A549 (cell line): ENCODE measurements at regions of chr3 and their contacts with region 1.

Region 1: DNA sequence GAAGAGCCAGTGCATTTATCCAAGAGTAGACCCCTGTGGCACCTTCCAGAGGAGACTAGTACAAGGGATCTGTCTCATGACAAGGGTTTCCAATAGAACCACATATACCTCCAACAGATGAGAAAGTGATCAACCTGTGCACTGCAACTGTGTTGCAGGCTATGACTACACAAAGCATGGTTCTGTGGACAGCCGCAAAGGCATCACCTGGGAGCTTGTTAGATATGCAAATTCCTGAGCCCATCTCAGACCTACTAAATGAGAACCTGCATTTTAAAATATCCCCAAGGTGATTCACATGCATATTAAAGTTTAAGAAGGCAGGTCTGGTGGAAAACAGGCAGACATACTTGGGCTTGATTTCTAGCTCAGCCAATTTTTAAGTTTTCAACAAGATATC is 368.7 kb downstream of the FOXP1 start:
- DNase-seq: no peak
- ATAC-seq: no peak
- H3K4me3 ChIP-seq: no peak overlapping the region
- H3K27ac ChIP-seq: no peak overlapping the region
- H3K4me1 ChIP-seq: peaks cover 21% of the 10 kb centered on the region
- CTCF ChIP-seq: no peak
- EP300 ChIP-seq: no peak
- POLR2A ChIP-seq: no peak
- RAD21 ChIP-seq: no peak

Region 2: DNA sequence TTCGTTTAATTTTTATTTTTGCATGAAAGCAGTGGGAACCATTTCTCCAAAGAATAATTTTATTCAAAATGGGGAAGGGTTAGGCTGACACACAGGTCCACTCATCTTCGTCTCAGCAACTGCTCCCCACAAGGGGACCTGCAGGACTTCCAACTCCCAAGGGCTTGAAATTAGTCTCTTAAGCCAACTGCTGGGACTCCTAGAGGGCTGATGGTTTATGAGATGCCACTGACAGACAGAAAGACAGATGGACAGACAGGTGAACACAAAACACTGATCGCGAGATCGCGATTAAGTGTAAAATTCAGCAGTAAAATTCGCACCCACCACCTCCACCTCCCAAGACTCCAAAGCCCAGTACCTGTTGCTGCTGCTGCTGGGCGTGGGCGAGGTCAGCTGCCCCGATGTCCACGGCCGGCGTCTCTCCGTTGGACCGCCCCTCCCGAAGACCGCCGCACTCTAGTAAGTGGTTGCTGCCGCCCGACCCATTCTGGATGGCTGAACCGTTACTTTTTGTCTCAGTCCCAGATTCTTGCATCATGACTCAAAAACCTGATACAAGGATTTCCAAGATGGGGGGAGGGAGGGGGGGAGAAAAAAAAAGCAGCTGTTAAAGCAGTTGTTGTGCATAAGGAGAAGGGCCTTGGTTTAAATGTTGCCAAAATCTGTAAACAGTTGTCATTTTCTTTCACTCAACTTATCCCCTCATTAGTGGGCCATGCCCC is 16.8 kb before region 1 on chr3:
- CTCF ChIA-PET with region 1: no interaction called
- POLR2A ChIA-PET with region 1: no interaction called
- DNase-seq: no peak
- ATAC-seq: no peak
- H3K4me3 ChIP-seq: no peak overlapping the region
- H3K27ac ChIP-seq: no peak overlapping the region
- H3K4me1 ChIP-seq: peaks cover 16% of the 10 kb centered on the region
- CTCF ChIP-seq: no peak
- EP300 ChIP-seq: no peak
- POLR2A ChIP-seq: 0 out of 2 replicates have a peak, but pooled peaks have one; percentile 10
- RAD21 ChIP-seq: no peak

Region 3: GRCh38 chr3:71229905-71230657 is 15.3 kb after region 1 on chr3:
- CTCF ChIA-PET with region 1: interaction called, 13 read pairs
- POLR2A ChIA-PET with region 1: interaction called, 4 read pairs
- DNase-seq: no peak
- ATAC-seq: no peak
- H3K4me3 ChIP-seq: no peak overlapping the region
- H3K27ac ChIP-seq: no peak overlapping the region
- H3K4me1 ChIP-seq: 0 out of 3 replicates have a peak, but pooled peaks cover 3% of the 10 kb centered on the region
- CTCF ChIP-seq: no peak
- EP300 ChIP-seq: no peak
- POLR2A ChIP-seq: no peak
- RAD21 ChIP-seq: no peak